ENCODE measurements at regions of chr7 and their contacts with region 1.

Region 1: GRCh38 chr7:16431646-16432424 is 10.5 kb upstream of the CRPPA start:
- DNase-seq: peak in 6 of 14 experiments; percentile 1 to 62 (median 42)
- ATAC-seq: peak; percentile 81
- H3K4me3 ChIP-seq: no peak overlapping the region
- H3K4me3 Mint-ChIP-seq: no peak overlapping the region
- H3K27ac ChIP-seq: no peak overlapping the region
- H3K27ac Mint-ChIP-seq: no peak overlapping the region
- H3K4me1 ChIP-seq: no peaks in the 10 kb centered on the region
- H3K4me1 Mint-ChIP-seq: no peaks in the 10 kb centered on the region
- H3K27me3 ChIP-seq: no peaks in the 10 kb centered on the region
- H3K27me3 Mint-ChIP-seq: no peaks in the 10 kb centered on the region
- CTCF ChIP-seq: peak; percentile 60

Region 2: DNA sequence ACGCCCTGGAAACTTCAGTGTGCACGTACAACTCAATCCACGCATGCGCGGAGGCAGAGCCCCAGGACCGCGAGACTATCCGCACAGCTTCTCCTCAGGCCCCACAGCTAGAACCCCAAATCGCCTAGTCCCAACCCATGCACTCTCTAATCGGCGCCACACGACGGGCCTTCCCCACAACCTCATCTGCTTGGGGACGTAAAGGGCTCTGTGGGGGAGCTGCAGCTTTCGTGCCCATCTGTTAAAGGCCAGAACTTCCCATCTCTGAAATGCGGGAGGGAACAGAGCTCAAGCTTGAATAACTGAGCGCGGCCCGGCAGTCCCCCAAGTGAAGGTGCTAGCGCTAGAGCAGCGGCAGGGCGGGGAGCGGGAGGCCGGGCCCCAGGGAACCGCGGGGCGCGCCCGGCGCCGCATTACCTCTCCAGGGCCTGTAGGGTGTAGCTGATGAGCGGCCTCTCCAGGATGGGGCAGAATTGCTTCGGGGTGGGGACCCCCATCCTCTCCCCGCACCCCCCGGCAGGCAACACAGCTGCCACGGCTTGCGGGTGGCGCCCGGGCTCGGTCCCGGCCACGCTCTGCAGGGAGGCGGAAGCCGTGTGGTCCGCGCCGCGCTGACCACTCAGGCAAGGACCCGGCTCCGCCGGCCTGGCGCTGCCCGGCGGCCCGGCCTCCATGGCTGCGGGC is 11.0 kb before region 1 on chr7:
- CTCF ChIA-PET with region 1: interaction called, 4 read pairs
- POLR2A ChIA-PET with region 1: interaction called, 18 read pairs
- intact Hi-C with region 1: no loop called
- DNase-seq: peak; percentile 50 to 94 (median 78)
- ATAC-seq: peak; percentile 89
- H3K4me3 ChIP-seq: peak overlapping the region; percentile 67
- H3K4me3 Mint-ChIP-seq: peak overlapping the region; percentile 90
- H3K27ac ChIP-seq: peak overlapping the region; percentile 77 to 80
- H3K27ac Mint-ChIP-seq: peak overlapping the region; percentile 87
- H3K4me1 ChIP-seq: peaks cover 14% of the 10 kb centered on the region
- H3K4me1 Mint-ChIP-seq: peaks cover 23% of the 10 kb centered on the region
- H3K27me3 ChIP-seq: no peaks in the 10 kb centered on the region
- H3K27me3 Mint-ChIP-seq: no peaks in the 10 kb centered on the region
- CTCF ChIP-seq: peak; percentile 33

Measured in CD4-positive, alpha-beta T cell (primary cell).